ENCODE measurements at regions of chr1 and their contacts with region 1.

Region 1: GRCh38 chr1:224922404-224923164 is 6.9 kb upstream of the DNAH14 start:
- DNase-seq: peak; percentile 11
- ATAC-seq: peak; percentile 84
- H3K4me3 ChIP-seq: no peak overlapping the region
- H3K27ac ChIP-seq: no peak overlapping the region
- H3K4me1 ChIP-seq: no peaks in the 10 kb centered on the region
- H3K27me3 ChIP-seq: no peaks in the 10 kb centered on the region
- CTCF ChIP-seq: peak; percentile 54 to 78 (median 61); a peak in 5 of 6 replicates
- EP300 ChIP-seq: no peak
- POLR2A ChIP-seq: no peak
- RAD21 ChIP-seq: peak; percentile 78

Region 2: DNA sequence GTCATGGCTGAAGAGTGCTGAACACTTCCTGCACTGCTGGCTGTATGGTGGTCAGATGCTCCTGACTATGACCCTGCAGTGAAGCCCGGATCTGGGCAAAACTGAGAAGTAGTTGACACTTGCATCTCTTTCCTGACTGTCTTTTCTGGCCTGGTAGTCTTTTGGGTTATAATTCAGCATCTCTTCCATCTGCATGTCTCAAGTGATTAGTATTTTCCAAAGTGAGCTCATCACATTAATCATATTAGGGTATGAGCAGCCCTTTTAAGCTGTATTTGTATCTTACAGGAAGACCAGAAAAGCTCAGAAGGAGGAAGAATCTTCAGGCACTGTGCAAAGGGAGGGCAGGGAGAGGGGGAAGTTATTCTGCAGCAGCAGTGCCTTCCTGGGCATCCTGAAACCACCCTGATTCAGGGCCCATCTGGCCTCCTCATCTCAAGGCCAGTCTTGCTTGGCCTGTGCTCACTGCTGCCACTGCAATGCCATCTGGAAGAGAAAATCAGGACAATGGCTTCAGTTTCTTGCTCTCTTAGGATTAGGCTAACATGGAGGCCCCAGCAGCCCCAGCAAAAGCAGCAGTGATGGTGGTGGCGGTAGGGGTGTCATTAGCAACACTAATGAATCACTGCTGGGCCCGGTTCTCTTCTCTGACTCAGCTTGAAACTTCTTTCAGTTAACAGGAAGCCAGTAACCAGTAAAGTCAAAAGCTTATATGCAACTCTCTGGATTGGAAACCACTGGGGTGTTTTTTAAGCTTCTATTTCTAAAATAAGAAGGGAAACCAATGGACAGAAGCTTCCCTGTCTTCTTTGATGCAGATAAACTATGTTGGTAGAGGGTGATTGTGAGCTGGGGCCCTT is 424.6 kb before region 1 on chr1:
- CTCF ChIA-PET with region 1: interaction called, 16 read pairs
- POLR2A ChIA-PET with region 1: no interaction called
- RAD21 ChIA-PET with region 1: interaction called, 6 read pairs
- SMC1A ChIA-PET with region 1: interaction called, 10 read pairs
- in situ Hi-C with region 1: no loop called
- intact Hi-C with region 1: no loop called
- DNase-seq: peak; percentile 80
- ATAC-seq: peak; percentile 98
- H3K4me3 ChIP-seq: peak overlapping the region; percentile 28; the same call in 1 of the 2 replicates
- H3K27ac ChIP-seq: peak overlapping the region; percentile 92
- H3K4me1 ChIP-seq: peaks cover 37% of the 10 kb centered on the region
- H3K27me3 ChIP-seq: no peaks in the 10 kb centered on the region
- CTCF ChIP-seq: no peak
- EP300 ChIP-seq: peak in 1 of 2 experiments; percentile 82; a peak in 2 of 4 replicates
- POLR2A ChIP-seq: peak; percentile 54
- RAD21 ChIP-seq: no peak

Region 3: GRCh38 chr1:224675590-224675989 is 247.0 kb before region 1 on chr1:
- CTCF ChIA-PET with region 1: interaction called, 11 read pairs
- POLR2A ChIA-PET with region 1: no interaction called
- RAD21 ChIA-PET with region 1: interaction called, 4 read pairs
- SMC1A ChIA-PET with region 1: interaction called, 6 read pairs
- in situ Hi-C with region 1: no loop called
- intact Hi-C with region 1: no loop called
- DNase-seq: no peak
- ATAC-seq: peak; percentile 73
- H3K4me3 ChIP-seq: no peak overlapping the region
- H3K27ac ChIP-seq: no peak overlapping the region
- H3K4me1 ChIP-seq: peaks cover 3% of the 10 kb centered on the region; the same call in 1 of the 2 replicates
- H3K27me3 ChIP-seq: no peaks in the 10 kb centered on the region; a peak in 1 of 4 replicates
- CTCF ChIP-seq: no peak
- EP300 ChIP-seq: no peak; a peak in 1 of 4 replicates
- POLR2A ChIP-seq: no peak
- RAD21 ChIP-seq: no peak

Region 4: GRCh38 chr1:224860488-224861338 is 61.9 kb before region 1 on chr1:
- CTCF ChIA-PET with region 1: interaction called, 10 read pairs
- POLR2A ChIA-PET with region 1: no interaction called
- RAD21 ChIA-PET with region 1: interaction called, 90 read pairs
- SMC1A ChIA-PET with region 1: interaction called, 7 read pairs
- in situ Hi-C with region 1: no loop called
- intact Hi-C with region 1: no loop called
- DNase-seq: no peak
- ATAC-seq: no peak
- H3K4me3 ChIP-seq: no peak overlapping the region
- H3K27ac ChIP-seq: no peak overlapping the region
- H3K4me1 ChIP-seq: no peaks in the 10 kb centered on the region
- H3K27me3 ChIP-seq: no peaks in the 10 kb centered on the region; a peak in 1 of 4 replicates
- CTCF ChIP-seq: no peak
- EP300 ChIP-seq: no peak
- POLR2A ChIP-seq: no peak
- RAD21 ChIP-seq: no peak

Region 5: DNA sequence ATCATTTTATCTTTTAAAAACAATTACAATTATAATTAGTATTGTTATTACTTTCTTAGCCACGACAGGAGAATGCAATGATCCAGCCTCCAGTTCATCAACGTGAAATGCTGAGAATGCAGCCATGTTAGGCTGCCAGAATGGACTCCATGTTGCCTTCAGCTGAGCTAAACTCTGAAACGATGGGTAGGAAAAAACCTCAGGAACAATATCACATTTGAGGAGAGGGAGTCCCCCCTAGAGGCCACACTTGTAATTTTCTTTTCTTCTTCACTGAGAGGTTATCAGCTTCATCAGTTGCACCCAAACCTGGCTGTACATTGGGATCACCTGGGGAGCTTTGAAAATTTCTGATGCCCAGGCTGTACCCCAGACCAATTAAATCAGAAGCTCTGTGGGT is 27.7 kb before region 1 on chr1:
- CTCF ChIA-PET with region 1: interaction called, 27 read pairs
- POLR2A ChIA-PET with region 1: no interaction called
- RAD21 ChIA-PET with region 1: interaction called, 31 read pairs
- SMC1A ChIA-PET with region 1: interaction called, 17 read pairs
- in situ Hi-C with region 1: no loop called
- intact Hi-C with region 1: no loop called
- DNase-seq: no peak
- ATAC-seq: peak; percentile 61
- H3K4me3 ChIP-seq: no peak overlapping the region
- H3K27ac ChIP-seq: no peak overlapping the region
- H3K4me1 ChIP-seq: no peaks in the 10 kb centered on the region
- H3K27me3 ChIP-seq: no peaks in the 10 kb centered on the region
- CTCF ChIP-seq: peak; percentile 17 to 20 (median 17); a peak in 3 of 6 replicates
- EP300 ChIP-seq: no peak
- POLR2A ChIP-seq: no peak
- RAD21 ChIP-seq: peak; percentile 26

Region 6: DNA sequence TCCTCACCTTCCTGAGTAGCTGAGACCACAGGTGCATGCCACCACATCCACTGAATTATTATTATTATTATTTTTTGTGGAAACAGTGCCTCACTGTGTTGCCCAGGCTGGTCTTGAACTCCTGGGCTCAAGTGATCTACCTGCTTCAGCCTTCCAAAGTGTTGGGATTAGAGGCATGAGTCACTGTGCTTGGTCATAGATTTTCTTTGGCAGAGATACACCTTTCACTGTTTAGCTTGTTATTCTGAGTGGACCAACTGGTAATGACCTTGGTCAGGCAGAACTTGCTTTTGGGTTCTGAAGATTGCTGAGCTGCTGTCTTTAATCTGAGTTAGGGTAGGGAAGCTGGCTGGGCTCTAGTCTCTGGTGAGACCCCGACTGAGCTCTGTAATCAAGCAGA is 73.7 kb after region 1 on chr1:
- CTCF ChIA-PET with region 1: no interaction called
- POLR2A ChIA-PET with region 1: no interaction called
- RAD21 ChIA-PET with region 1: no interaction called
- SMC1A ChIA-PET with region 1: no interaction called
- in situ Hi-C with region 1: no loop called
- intact Hi-C with region 1: no loop called
- DNase-seq: no peak
- ATAC-seq: no peak
- H3K4me3 ChIP-seq: no peak overlapping the region
- H3K27ac ChIP-seq: no peak overlapping the region
- H3K4me1 ChIP-seq: no peaks in the 10 kb centered on the region
- H3K27me3 ChIP-seq: no peaks in the 10 kb centered on the region
- CTCF ChIP-seq: no peak
- EP300 ChIP-seq: no peak
- POLR2A ChIP-seq: no peak
- RAD21 ChIP-seq: no peak